Cardiac septum (tissue), 1 donor: ENCODE measurements at regions of chr14 and their contacts with region 1.

Region 1: DNA sequence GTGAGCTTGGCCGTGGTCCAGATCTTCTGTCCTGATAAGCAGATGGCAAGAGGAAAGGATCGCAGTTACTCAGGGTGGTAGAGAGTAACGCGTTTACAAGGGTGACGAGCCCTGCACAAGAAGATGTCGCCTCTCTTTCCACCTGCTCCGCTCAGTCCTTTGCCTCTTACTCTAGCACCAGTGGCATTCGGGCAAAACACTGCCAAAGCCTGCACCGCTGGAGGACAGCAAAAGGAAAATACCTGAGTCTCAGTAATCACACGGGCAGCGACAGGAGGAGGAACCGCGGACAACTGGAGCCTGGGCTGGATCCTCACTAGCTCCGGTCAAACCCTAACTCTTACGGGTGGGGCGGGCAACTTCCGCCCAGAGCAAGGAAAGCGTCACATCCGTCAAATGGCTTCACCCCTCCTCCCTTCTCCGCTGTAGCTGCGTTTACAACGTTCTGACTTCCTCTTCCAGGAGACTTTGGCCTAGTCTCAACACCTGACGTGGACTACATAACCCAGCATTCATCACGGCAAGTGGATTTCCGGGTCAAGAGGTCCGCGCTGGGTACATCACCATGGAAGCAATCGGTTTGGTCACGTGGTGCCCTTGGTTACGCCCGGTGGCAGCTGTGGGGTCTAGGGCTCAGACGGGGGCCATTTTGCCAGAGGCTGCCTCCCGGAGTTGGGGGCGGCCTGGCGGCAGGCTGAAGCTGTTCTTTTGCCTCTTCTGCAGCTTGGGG is at the starts of genes KLHL28 and TOGARAM1:
- DNase-seq: peak; percentile 98
- total RNA-seq, gene KLHL28: 11.2 TPM
- total RNA-seq, gene TOGARAM1: 16.3 TPM

Region 2: DNA sequence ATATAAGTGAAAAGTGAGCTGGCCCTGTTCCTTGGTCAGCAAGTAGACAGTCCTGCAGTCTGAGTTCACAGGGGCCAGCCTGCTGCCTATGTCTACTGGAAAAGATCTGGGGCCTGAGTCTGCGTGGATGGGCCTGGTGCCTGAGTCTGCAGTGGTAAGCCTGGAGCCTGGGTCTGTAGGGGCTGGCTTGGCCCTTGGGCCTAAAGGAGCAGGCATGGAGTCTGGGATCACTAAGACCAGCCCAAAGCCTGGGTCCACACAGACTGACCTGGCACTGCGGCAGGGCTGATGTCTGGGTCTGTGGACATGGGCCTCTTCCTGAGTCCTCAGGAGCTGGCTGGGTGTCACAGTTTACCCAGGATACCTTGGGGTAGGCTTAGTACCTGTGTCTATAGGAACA is 95.4 kb before region 1 on chr14:
- intact Hi-C with region 1: no loop called
- DNase-seq: no peak

Region 3: GRCh38 chr14:45253068-45253753 is 291.4 kb after region 1 on chr14 and contains the start of gene MIS18BP1:
- intact Hi-C with region 1: loop called (anchors 5 kb)
- DNase-seq: peak; percentile 97
- total RNA-seq, gene MIS18BP1: 9.7 TPM